IMR-90 (cell line): ENCODE measurements at regions of chr11 and their contacts with region 1.

Region 1: GRCh38 chr11:73625696-73626318 is 20.6 kb upstream of the PLEKHB1 start:
- DNase-seq: peak; percentile 59
- ATAC-seq: peak; percentile 99
- H3K4me3 ChIP-seq: peak overlapping the region; percentile 8; the same call in 1 of the 2 replicates
- H3K27ac ChIP-seq: no peak overlapping the region
- H3K4me1 ChIP-seq: no peaks in the 10 kb centered on the region
- H3K27me3 ChIP-seq: peaks cover 35% of the 10 kb centered on the region
- CTCF ChIP-seq: peak; percentile 86
- POLR2A ChIP-seq: no peak
- RAD21 ChIP-seq: peak; percentile 81

Region 2: GRCh38 chr11:73478738-73479347 is 147.0 kb before region 1 on chr11:
- CTCF ChIA-PET with region 1: interaction called, 9 read pairs
- POLR2A ChIA-PET with region 1: no interaction called
- dilution Hi-C with region 1: no loop called
- in situ Hi-C with region 1: no loop called
- intact Hi-C with region 1: loop called (anchors 2 kb)
- DNase-seq: peak; percentile 42
- ATAC-seq: peak; percentile 89
- H3K4me3 ChIP-seq: no peak overlapping the region
- H3K27ac ChIP-seq: no peak overlapping the region
- H3K4me1 ChIP-seq: peaks cover 3% of the 10 kb centered on the region
- H3K27me3 ChIP-seq: no peaks in the 10 kb centered on the region
- CTCF ChIP-seq: peak; percentile 74
- POLR2A ChIP-seq: no peak
- RAD21 ChIP-seq: peak; percentile 68

Region 3: GRCh38 chr11:73612601-73613140 is 13.1 kb before region 1 on chr11:
- CTCF ChIA-PET with region 1: interaction called, 10 read pairs
- POLR2A ChIA-PET with region 1: no interaction called
- dilution Hi-C with region 1: no loop called
- in situ Hi-C with region 1: no loop called
- intact Hi-C with region 1: no loop called
- DNase-seq: peak; percentile 8
- ATAC-seq: no peak
- H3K4me3 ChIP-seq: no peak overlapping the region
- H3K27ac ChIP-seq: no peak overlapping the region
- H3K4me1 ChIP-seq: no peaks in the 10 kb centered on the region
- H3K27me3 ChIP-seq: peaks cover 4% of the 10 kb centered on the region; the same call in 1 of the 2 replicates
- CTCF ChIP-seq: no peak
- POLR2A ChIP-seq: no peak
- RAD21 ChIP-seq: no peak

Region 4: DNA sequence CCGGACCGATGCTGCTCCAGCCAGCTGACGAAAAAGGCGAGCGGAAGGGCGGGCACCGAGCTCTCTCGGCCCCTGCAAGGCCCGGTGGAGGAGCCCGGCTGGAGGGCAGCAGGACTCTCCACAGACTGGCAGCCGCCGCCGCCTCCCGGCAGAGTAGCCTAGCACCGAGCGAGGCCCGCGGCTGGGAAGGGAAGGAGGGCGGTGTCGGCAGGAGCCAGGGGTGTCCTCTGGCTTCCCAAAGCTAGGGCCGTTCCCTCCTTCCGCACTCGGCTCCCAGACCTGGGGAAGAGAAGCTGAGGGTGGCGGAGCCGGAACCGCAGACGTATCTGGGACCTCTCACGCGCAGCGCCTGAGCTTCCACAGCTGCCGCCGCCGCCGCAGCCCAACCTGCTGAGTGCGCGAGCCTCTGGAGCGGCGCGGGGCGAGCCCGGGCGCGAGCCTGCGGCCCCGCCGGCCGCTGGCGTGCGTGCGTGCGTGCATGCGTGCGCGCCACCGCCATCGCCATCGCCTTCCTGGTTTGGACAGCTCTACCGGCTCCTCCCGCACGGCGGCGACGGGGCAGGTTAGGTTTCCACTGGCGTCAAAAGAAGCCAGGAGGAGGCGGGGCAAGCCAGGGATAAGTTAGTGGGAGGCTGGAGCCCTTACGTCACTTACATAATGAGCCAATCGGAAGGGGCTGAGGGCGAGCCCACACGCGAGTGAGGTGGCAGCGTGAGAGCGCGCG is 135.0 kb after region 1 on chr11 and contains the start of gene RAB6A:
- CTCF ChIA-PET with region 1: no interaction called
- POLR2A ChIA-PET with region 1: no interaction called
- dilution Hi-C with region 1: no loop called
- in situ Hi-C with region 1: no loop called
- intact Hi-C with region 1: no loop called
- DNase-seq: peak; percentile 100
- ATAC-seq: peak; percentile 94
- H3K4me3 ChIP-seq: peak within 1 kb of the TSS; percentile 81
- H3K27ac ChIP-seq: peak within 1 kb of the TSS; percentile 92
- H3K4me1 ChIP-seq: no peaks in the 10 kb centered on the region
- H3K27me3 ChIP-seq: no peaks in the 10 kb centered on the region
- CTCF ChIP-seq: peak; percentile 46
- POLR2A ChIP-seq: peak; percentile 81
- RAD21 ChIP-seq: peak; percentile 37
- total RNA-seq, gene RAB6A: 81.0 and 120 TPM in 2 replicates

Region 5: DNA sequence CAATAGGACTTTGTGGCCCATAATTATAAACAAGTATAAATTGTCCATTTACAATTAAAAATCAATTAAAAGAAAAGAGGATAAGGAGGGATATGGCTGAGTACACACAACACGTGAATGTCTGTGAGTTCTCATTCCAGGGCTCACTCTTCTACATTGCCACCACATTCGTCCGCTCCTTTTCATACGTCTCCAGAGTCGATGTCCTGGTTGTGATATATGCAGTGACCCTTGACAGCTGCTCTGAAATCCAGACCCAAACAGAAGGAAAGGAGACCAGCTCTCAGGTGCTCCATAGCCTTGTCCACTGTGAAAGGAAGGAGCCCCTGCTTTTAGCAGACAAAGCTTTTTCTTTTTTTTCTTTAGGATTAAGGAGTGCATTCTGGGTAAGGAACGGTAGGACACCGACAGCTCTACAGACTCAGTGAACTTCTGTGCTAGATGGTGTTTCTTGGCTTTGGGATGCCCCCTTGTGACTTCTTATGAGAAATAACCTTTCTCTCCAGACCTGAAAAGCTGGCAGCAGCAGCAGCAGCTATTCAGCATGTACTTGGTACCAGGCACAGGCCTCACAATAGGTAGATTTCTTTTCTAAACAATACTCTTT is 305.3 kb after region 1 on chr11:
- CTCF ChIA-PET with region 1: interaction called, 4 read pairs
- POLR2A ChIA-PET with region 1: no interaction called
- dilution Hi-C with region 1: no loop called
- in situ Hi-C with region 1: loop called (anchors 10 kb)
- intact Hi-C with region 1: loop called (anchors 1 kb)
- DNase-seq: peak; percentile 84
- ATAC-seq: peak; percentile 95
- H3K4me3 ChIP-seq: no peak overlapping the region
- H3K27ac ChIP-seq: no peak overlapping the region
- H3K4me1 ChIP-seq: no peaks in the 10 kb centered on the region
- H3K27me3 ChIP-seq: no peaks in the 10 kb centered on the region
- CTCF ChIP-seq: peak; percentile 64
- POLR2A ChIP-seq: no peak
- RAD21 ChIP-seq: peak; percentile 81